HEK293 (cell line): ENCODE measurements at regions of chr6 and their contacts with region 1.

Region 1: GRCh38 chr6:116287689-116288282 is 8.1 kb upstream of the TSPYL1 start:
- H3K4me3 ChIP-seq: no peak overlapping the region
- H3K27ac ChIP-seq: no peak overlapping the region
- H3K4me1 ChIP-seq: no peaks in the 10 kb centered on the region
- CTCF ChIP-seq: peak; percentile 24; the same call in 1 of the 2 replicates

Region 2: DNA sequence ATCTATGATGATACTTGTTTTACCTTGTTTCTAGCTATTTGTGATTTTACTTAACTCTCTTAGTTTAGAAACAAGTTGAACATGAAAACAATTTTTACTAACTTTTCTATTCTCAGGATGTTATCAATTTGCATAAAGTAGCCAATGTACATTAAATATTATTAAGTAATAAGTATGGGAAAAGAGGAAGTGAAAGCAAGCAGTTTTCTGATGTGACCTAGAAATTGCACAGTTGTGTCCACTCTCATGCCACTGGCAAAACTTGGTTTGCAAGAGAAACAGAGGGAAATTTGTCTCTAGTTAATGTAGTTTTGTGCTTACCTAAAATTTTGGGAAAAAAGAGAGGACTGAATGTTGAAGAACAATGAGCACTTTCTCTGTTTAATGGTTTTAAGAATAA is 11.2 kb after region 1 on chr6:
- CTCF ChIA-PET with region 1: interaction called, 13 read pairs
- POLR2A ChIA-PET with region 1: no interaction called
- H3K4me3 ChIP-seq: no peak overlapping the region
- H3K27ac ChIP-seq: no peak overlapping the region
- H3K4me1 ChIP-seq: no peaks in the 10 kb centered on the region
- CTCF ChIP-seq: no peak

Region 3: GRCh38 chr6:116359131-116359530 is 71.3 kb after region 1 on chr6:
- CTCF ChIA-PET with region 1: interaction called, 10 read pairs
- POLR2A ChIA-PET with region 1: no interaction called
- H3K4me3 ChIP-seq: no peak overlapping the region
- H3K27ac ChIP-seq: no peak overlapping the region
- H3K4me1 ChIP-seq: no peaks in the 10 kb centered on the region
- CTCF ChIP-seq: no peak

Region 4: GRCh38 chr6:116444092-116444491 is 156.3 kb after region 1 on chr6:
- CTCF ChIA-PET with region 1: interaction called, 47 read pairs
- POLR2A ChIA-PET with region 1: no interaction called
- H3K4me3 ChIP-seq: no peak overlapping the region
- H3K27ac ChIP-seq: no peak overlapping the region
- H3K4me1 ChIP-seq: peaks cover 14% of the 10 kb centered on the region
- CTCF ChIP-seq: 0 out of 2 replicates have a peak, but pooled peaks have one; percentile 20

Region 5: DNA sequence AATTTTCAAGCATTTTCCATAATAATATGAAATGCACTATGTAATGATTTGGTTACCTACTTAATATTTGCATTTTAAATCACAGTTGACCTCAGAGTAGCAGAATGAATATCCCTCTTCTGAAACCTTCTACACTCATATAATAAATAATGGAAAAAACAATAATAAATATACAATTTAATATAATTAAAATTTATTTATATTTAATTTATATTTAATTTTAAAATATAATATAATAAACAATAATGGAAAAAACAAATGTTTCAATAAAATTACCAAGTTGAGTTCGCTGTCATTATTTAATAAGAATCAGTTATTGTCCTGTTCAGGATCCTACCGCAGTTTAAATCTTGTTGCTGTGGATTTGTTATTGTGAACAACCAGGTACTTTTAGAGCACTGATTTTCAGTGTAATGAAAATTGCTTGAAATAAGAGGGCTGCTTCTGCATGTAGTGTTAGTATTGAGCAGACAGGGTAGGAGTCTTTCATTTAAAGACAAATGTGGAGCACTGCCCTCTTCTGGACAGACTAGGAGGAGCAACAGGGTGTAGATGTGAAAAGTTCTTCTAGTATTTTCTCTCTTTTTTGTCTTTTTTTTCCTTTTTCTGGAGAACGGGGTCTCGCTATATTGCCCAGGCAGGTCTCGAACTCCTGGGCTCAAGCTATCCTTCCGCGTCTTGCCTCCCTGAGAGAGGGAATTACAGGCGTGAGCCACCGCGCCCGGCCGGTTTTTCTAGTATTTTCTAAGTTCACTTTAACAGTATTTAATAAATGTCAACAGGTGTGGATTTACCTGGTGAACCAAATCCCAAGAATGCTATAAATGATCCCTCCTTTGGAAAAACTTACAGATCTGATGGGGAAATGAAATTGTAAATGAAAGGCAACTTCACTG is 244.1 kb after region 1 on chr6:
- CTCF ChIA-PET with region 1: interaction called, 108 read pairs
- POLR2A ChIA-PET with region 1: no interaction called
- H3K4me3 ChIP-seq: no peak overlapping the region
- H3K27ac ChIP-seq: no peak overlapping the region
- H3K4me1 ChIP-seq: peaks cover 28% of the 10 kb centered on the region
- CTCF ChIP-seq: 0 out of 2 replicates have a peak, but pooled peaks have one; percentile 36

Region 6: GRCh38 chr6:116561377-116562018 is 273.7 kb after region 1 on chr6:
- CTCF ChIA-PET with region 1: interaction called, 44 read pairs
- POLR2A ChIA-PET with region 1: no interaction called
- H3K4me3 ChIP-seq: no peak overlapping the region
- H3K27ac ChIP-seq: no peak overlapping the region
- H3K4me1 ChIP-seq: peaks cover 4% of the 10 kb centered on the region; the same call in 1 of the 2 replicates
- CTCF ChIP-seq: peak; percentile 48; the same call in 1 of the 2 replicates